GM10248 (cell line): ENCODE measurements at regions of chr15 and their contacts with region 1.

Region 1: DNA sequence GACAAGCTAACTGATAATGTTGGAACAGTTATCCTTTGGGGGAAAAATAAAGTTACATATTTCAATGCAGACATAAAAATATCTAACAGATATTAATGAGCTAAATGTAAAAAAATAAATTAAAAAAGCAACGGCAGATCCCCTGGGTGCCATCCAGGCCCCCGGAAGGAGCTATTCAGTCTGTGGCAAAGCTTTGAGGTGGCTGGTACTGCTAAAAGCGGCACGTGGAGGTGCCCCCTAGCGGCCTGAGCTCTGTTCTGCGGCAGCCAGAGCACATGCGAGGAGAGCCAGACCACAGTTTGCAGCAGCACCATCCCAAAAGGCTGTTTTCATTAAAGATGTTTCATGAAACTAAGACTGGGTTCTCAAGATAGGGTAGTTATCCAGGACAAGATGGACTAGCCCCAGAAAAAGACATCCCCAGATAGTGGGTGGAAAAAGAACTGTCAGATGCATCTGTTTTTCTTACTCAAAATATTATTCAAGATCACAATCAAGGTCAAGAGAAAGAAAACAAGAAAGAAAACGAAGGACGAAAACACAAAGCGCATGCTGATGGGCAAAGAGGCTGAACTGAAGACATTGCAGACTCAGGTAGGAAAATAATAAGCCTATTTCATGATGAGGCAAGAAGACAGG is 18.7 kb downstream of the AP3S2 start:
- DNase-seq: peak; percentile 84
- CTCF ChIP-seq: peak; percentile 93

Region 2: GRCh38 chr15:89750560-89751542 is 124.2 kb before region 1 on chr15 and contains the start of gene MESP1:
- CTCF ChIA-PET with region 1: interaction called, 18 read pairs
- POLR2A ChIA-PET with region 1: no interaction called
- DNase-seq: peak; percentile 95
- CTCF ChIP-seq: peak; percentile 80

Region 3: GRCh38 chr15:89776274-89777072 is 98.6 kb before region 1 on chr15 and contains the start of gene MESP2:
- CTCF ChIA-PET with region 1: interaction called, 10 read pairs
- POLR2A ChIA-PET with region 1: no interaction called
- DNase-seq: peak; percentile 90
- CTCF ChIP-seq: peak; percentile 28

Region 4: DNA sequence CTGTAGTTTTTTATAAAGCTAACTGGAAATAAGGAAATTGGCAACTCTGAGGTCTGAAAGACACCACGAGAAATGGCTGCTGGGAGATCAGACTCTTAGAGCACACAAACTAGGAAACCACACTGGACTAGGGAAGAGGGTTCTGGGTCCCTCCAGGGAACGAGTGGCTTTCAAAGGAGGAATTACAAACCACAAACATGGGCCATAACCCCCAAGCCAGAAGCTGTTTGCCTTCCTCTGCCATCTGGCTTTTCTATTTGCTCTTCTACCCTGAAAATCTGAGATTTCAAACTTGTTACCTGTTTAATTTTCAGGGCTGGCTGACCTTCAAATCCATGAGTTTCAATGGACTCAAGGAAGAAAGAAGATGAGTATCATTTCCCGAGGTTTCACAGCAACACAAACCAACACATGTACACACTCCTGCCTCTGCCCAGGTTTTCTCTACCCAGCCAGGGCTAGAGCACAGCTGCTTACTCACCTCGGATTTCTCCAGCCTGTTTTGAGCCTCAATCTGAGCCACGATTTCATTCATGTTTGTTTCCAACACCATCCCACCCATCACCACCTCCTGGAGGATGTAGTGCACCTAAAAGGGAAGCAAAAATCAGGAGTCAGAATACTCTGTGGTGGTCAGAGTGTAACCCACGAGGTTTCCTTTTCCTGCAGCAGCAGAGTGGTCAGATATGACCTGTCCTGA is 37.8 kb before region 1 on chr15:
- CTCF ChIA-PET with region 1: interaction called, 12 read pairs
- POLR2A ChIA-PET with region 1: no interaction called
- DNase-seq: no peak
- CTCF ChIP-seq: no peak

Region 5: GRCh38 chr15:89863918-89864317 is 11.1 kb before region 1 on chr15:
- CTCF ChIA-PET with region 1: interaction called, 46 read pairs
- POLR2A ChIA-PET with region 1: no interaction called
- DNase-seq: no peak
- CTCF ChIP-seq: no peak

Region 6: DNA sequence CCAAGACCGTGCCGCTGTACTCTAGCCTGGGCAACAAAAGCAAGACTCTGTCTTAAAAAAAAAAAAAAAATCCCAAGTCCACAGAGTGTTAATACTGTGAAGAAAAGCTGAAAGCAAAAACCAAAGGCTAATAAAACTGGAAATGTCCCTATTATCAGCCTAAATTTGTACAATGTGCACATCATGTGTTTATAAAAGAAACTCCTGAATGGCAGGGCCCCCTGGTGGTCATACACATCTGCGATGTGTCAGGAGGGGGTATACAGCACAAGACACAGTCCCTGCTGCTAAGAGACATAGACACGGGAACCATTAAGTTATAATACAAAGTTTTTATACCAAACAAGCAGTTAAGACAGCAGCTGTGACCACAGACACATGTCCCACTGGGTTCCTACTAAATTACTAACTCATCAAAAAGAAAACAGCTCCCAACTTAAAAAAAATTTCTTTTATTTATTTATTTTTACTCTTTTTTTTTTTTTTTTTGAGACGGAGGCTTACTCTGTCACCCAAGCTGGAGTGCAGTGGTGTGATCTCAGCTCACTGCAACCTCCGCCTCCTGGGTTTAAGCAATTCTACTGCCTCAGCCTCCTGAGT is 196.3 kb after region 1 on chr15:
- CTCF ChIA-PET with region 1: interaction called, 11 read pairs
- POLR2A ChIA-PET with region 1: no interaction called
- DNase-seq: peak; percentile 77
- CTCF ChIP-seq: peak; percentile 76